ENCODE measurements at regions of chr5 and their contacts with region 1.

Region 1: GRCh38 chr5:56270568-56271392 is 37.6 kb upstream of the ANKRD55 start:
- DNase-seq: peak; percentile 84
- H3K4me3 Mint-ChIP-seq: no peak overlapping the region
- H3K27ac Mint-ChIP-seq: peak overlapping the region; percentile 34
- H3K4me1 Mint-ChIP-seq: peaks cover 32% of the 10 kb centered on the region
- H3K27me3 Mint-ChIP-seq: peaks cover 9% of the 10 kb centered on the region

Region 2: DNA sequence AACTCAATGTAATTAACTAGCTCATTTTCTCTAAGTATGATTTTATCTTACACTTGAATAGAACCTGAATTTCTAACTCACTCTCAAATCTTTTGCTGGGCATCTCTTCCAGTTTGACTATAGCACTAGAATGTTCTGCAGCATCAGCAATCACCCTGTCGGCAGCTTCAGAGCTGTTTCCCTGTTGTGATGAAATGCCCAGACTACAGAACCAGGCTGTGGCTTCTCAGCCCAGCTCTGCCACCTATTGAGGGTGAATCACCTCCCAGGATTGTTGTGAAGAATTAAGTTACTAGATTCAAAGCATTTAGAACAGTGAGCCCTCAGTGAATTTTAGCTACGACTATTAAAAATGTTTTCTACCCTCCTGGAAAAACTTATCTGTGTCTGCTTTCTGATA is 52.7 kb after region 1 on chr5:
- CTCF ChIA-PET with region 1: interaction called, 25 read pairs
- DNase-seq: no peak
- H3K4me3 Mint-ChIP-seq: no peak overlapping the region
- H3K27ac Mint-ChIP-seq: no peak overlapping the region
- H3K4me1 Mint-ChIP-seq: peaks cover 46% of the 10 kb centered on the region
- H3K27me3 Mint-ChIP-seq: peaks cover 5% of the 10 kb centered on the region

Region 3: GRCh38 chr5:56328753-56329560 is 58.2 kb after region 1 on chr5:
- CTCF ChIA-PET with region 1: interaction called, 25 read pairs
- DNase-seq: peak; percentile 72
- H3K4me3 Mint-ChIP-seq: peak overlapping the region; percentile 16
- H3K27ac Mint-ChIP-seq: peak overlapping the region; percentile 93
- H3K4me1 Mint-ChIP-seq: peaks cover 65% of the 10 kb centered on the region
- H3K27me3 Mint-ChIP-seq: no peaks in the 10 kb centered on the region

Region 4: DNA sequence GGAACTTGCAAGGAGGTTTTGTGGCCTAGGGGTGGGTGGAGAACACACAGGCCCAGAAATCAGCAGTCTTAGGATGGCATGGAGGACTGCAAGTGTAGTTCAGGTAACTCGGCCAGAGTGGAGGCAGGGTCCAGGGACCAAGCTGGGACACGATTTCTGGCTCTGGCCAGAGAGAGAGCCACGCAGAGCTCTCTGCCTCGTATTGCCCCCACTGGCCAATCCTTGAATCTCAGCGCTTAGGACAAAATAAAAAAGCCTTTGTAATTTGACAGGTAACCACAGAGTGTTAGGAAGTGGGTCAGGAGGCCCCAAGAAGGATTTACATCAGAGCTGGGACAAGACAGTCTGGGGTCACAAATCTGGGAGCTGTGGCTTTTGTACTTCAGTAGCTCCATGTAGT is 556.3 kb after region 1 on chr5:
- CTCF ChIA-PET with region 1: interaction called, 141 read pairs
- DNase-seq: no peak
- H3K4me3 Mint-ChIP-seq: no peak overlapping the region
- H3K27ac Mint-ChIP-seq: no peak overlapping the region
- H3K4me1 Mint-ChIP-seq: peaks cover 92% of the 10 kb centered on the region
- H3K27me3 Mint-ChIP-seq: no peaks in the 10 kb centered on the region

Region 5: GRCh38 chr5:56900858-56901578 is 630.2 kb after region 1 on chr5:
- CTCF ChIA-PET with region 1: interaction called, 17 read pairs
- DNase-seq: peak; percentile 36
- H3K4me3 Mint-ChIP-seq: no peak overlapping the region
- H3K27ac Mint-ChIP-seq: no peak overlapping the region
- H3K4me1 Mint-ChIP-seq: no peaks in the 10 kb centered on the region
- H3K27me3 Mint-ChIP-seq: peaks cover 20% of the 10 kb centered on the region